ENCODE measurements at regions of chr4 and their contacts with region 1.

Region 1: DNA sequence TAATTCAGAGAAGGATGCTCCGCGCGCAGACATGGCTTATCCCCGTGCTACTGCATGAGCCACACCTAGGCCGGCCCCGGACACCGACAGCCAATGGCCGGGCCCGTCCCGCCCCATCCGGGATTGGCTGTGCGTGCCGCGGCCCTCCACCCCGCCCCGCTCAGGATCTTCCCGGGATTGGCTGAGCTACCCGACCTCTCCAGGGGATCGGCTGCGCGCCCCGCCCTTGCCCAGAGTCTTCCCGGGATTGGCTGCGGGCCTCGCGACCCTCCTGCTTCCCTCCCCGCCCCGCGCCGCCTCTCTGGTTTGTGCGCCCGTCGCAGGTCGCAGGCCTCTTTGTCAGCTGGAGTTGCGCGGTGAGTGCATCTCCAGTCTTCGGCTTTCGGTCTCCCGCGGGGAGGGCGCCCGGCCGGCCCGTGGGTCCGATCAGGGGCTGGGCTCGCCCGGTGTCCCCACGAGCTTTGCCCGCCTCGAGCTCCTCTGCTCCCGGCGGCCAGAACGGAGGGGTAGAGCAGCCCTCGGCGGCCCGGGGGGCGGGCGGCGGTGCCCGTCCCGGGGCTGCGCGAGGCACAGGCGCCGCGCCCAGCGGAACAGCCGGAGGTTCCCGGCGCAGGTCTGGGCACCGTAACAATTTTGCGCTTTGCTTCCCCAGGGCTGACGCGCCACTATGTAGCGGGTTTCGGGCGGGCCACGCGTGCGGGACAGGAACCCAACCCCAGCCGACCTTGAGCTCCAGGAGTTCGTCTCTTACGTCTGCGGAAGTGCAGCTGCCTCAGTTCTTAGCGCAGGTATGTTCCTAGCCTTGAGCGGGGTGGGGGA is 38.8 kb downstream of the ERVMER34-1 start:
- DNase-seq: peak; percentile 98
- ATAC-seq: peak; percentile 99

Region 2: DNA sequence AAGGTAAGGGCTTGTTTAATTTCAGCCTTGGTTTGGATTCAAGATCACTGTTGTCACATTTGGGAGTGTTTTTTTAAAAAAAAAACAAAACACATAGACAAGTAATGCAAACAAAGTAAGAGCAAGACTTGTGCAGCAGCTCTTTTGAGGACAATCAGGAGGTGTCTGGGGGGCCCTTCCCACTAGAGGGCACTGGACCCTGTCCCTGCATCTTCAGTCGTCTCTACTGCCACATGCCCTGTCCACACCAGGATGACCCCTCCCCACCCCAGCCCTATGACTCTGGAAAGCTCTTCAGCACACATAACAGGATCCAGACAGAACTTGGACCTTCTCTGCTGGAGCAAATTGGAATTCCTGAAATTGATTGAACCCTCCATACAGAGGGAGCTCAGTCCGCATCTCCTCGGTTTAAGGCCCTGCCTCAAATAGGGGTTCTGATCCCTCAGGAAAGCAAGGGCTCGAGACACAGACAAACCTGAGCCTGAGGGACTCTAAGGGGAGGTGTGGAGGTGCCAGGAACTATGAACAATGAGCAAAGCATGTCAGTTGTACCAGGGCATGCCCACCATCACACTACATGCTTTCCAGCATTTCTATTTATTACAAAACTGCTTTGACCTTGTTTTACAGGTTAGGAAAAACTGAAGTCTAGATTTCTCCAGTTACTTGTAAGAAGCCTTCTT is 124.1 kb before region 1 on chr4:
- intact Hi-C with region 1: loop called (anchors 5 kb)
- DNase-seq: no peak
- ATAC-seq: peak; percentile 44

Measured in Right ventricle myocardium inferior (tissue), 1 donor.